ENCODE measurements at regions of chr1 and their contacts with region 1.

Region 1: GRCh38 chr1:1399187-1399871 is at the start of gene CCNL2:
- DNase-seq: peak; percentile 93
- ATAC-seq: peak; percentile 88
- H3K4me3 ChIP-seq: peak within 1 kb of the TSS; percentile 75 to 95 (median 93)
- H3K27ac ChIP-seq: peak within 1 kb of the TSS; percentile 85
- H3K4me1 ChIP-seq: peaks cover 53% of the 10 kb centered on the region
- H3K27me3 ChIP-seq: no peaks in the 10 kb centered on the region
- CTCF ChIP-seq: peak; percentile 63
- EP300 ChIP-seq: no peak
- POLR2A ChIP-seq: peak in 1 of 2 experiments; percentile 62; a peak in 2 of 4 replicates
- RAD21 ChIP-seq: 0 out of 2 replicates have a peak, but pooled peaks have one; percentile 6
- total RNA-seq, gene CCNL2: 19.6 and 105 TPM in 2 replicates

Region 2: DNA sequence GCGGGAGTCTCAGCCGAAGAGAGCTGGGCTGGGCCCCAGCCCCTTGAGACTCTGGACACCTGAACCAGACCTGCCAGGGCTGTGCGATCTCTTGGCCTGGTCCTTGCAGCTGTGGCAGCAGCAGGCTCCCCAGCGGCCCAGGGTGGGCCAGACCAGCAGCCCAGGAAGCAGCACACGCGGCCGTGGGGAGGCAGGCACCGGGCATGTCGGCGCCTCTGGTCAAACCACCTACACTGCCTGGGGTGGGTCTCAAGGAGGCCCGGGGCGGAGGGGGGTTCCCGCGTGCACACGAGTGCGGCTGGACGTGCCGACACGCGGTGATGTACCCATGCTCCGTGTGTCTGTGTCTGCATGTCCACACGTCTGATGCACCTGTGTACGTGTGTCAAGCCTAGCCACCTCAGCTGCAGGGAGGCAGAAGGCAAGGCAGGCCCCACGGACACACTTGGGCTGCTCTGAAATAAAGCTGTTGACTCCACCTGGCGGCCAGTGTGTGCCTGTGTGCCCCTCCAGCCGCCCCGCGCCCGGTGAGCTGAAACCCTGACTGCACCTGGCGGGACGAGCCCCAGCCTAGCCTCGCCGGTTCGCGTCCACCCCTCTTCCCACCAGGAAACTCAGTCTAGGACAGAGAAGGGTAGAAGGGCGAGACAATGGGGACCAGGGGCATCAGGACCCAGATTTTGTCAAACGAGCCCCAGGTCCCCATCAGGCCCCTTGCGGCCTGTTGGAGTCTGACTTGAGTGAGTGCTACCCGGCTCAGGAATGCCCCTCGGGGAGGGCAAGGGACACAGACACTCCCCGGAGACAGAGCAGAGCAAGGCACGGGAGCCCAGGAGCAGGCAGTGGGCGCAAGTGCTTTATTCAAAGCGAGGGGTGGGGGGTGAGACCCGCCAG is 107.5 kb before region 1 on chr1:
- CTCF ChIA-PET with region 1: no interaction called
- POLR2A ChIA-PET with region 1: no interaction called
- in situ Hi-C with region 1: no loop called
- intact Hi-C with region 1: no loop called
- DNase-seq: peak; percentile 64
- ATAC-seq: peak; percentile 71
- H3K4me3 ChIP-seq: no peak overlapping the region
- H3K27ac ChIP-seq: no peak overlapping the region
- H3K4me1 ChIP-seq: peaks cover 11% of the 10 kb centered on the region
- H3K27me3 ChIP-seq: no peaks in the 10 kb centered on the region
- CTCF ChIP-seq: peak; percentile 96
- EP300 ChIP-seq: no peak
- POLR2A ChIP-seq: no peak
- RAD21 ChIP-seq: peak; percentile 79; the same call in 1 of the 2 replicates

Region 3: GRCh38 chr1:1358433-1359261 is 40.7 kb before region 1 on chr1 and contains the start of gene MXRA8:
- CTCF ChIA-PET with region 1: no interaction called
- POLR2A ChIA-PET with region 1: interaction called, 21 read pairs
- in situ Hi-C with region 1: no loop called
- intact Hi-C with region 1: no loop called
- DNase-seq: peak; percentile 79
- ATAC-seq: peak; percentile 28
- H3K4me3 ChIP-seq: peak within 1 kb of the TSS; percentile 69 to 74 (median 71)
- H3K27ac ChIP-seq: peak within 1 kb of the TSS; percentile 88
- H3K4me1 ChIP-seq: peaks cover 57% of the 10 kb centered on the region
- H3K27me3 ChIP-seq: no peaks in the 10 kb centered on the region
- CTCF ChIP-seq: 0 out of 2 replicates have a peak, but pooled peaks have one; percentile 4
- EP300 ChIP-seq: no peak
- POLR2A ChIP-seq: no peak
- RAD21 ChIP-seq: no peak
- total RNA-seq, gene MXRA8: 5.4 and 19.8 TPM in 2 replicates

Region 4: DNA sequence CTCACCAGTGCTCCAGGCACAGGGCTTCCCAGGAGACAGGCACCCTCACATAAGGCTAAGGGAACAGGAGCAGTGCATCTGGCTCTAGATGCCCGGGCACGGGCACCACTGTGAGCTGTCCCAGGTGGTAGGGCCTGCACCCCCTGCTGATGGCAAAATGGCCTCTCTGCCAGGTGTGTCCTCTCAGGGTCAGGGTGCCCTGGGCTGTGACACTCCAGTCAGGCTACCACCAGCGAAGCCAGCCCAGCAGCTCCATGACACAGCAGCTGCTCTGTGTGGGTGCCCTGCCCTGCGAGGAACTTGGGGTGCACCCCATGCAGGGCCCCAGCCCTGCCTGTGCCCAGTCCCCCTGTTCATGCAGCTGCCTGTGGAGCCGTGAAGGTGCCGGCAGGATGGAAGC is 18.9 kb before region 1 on chr1:
- CTCF ChIA-PET with region 1: no interaction called
- POLR2A ChIA-PET with region 1: interaction called, 43 read pairs
- in situ Hi-C with region 1: no loop called
- intact Hi-C with region 1: loop called (anchors 2 kb)
- DNase-seq: no peak
- ATAC-seq: no peak
- H3K4me3 ChIP-seq: no peak overlapping the region
- H3K27ac ChIP-seq: no peak overlapping the region
- H3K4me1 ChIP-seq: peaks cover 37% of the 10 kb centered on the region
- H3K27me3 ChIP-seq: no peaks in the 10 kb centered on the region
- CTCF ChIP-seq: no peak
- EP300 ChIP-seq: no peak
- POLR2A ChIP-seq: no peak
- RAD21 ChIP-seq: no peak

Region 5: DNA sequence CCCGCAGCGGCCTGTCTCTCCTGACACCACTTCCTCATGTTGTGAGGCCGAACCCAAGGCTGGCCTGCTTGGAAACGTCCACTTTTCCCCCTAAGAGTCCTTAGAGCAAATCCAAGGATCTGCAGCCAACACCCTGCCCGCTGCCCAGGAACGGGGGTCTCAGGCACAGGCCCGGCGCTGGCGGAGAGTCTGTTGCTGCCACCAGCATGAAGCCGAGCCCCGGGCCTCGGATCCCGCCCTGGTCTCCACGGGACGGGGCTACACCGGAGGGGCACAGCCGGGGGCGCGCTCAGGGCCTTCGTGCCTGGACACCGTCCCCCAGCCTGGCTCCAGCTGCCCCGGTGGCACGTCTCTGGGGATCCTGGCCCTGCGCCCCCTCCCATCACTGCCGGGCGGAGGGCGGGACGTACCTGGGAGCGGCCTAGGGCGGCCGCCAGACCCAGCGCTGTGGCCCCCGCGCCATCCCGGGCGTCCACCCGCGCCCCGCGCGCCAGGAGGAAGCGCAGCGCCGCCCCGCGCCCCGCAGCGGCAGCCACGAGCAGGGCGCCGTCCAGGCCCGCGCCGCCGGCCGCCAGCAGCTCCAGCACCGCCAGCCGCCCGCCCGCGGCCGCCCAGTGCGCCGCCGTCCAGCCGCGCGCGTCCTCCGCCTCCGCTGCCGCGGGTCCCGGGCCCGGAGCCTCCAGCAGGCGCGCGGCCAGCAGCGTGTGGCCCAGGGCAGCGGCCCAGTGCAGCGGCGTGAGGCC is 20.5 kb after region 1 on chr1:
- CTCF ChIA-PET with region 1: no interaction called
- POLR2A ChIA-PET with region 1: interaction called, 25 read pairs
- in situ Hi-C with region 1: no loop called
- intact Hi-C with region 1: no loop called
- DNase-seq: no peak
- ATAC-seq: peak; percentile 12; the same call in 1 of the 3 replicates
- H3K4me3 ChIP-seq: peak overlapping the region; percentile 37 to 74 (median 70); a peak in 5 of 6 replicates
- H3K27ac ChIP-seq: peak overlapping the region; percentile 44
- H3K4me1 ChIP-seq: peaks cover 67% of the 10 kb centered on the region
- H3K27me3 ChIP-seq: no peaks in the 10 kb centered on the region; a peak in 1 of 5 replicates
- CTCF ChIP-seq: no peak
- EP300 ChIP-seq: no peak
- POLR2A ChIP-seq: no peak
- RAD21 ChIP-seq: no peak

Region 6: GRCh38 chr1:1435106-1435903 is 36.0 kb after region 1 on chr1 and contains the start of gene VWA1:
- CTCF ChIA-PET with region 1: no interaction called
- POLR2A ChIA-PET with region 1: interaction called, 355 read pairs
- in situ Hi-C with region 1: loop called (anchors 5 kb)
- intact Hi-C with region 1: no loop called
- DNase-seq: no peak
- ATAC-seq: no peak
- H3K4me3 ChIP-seq: peak within 1 kb of the TSS; percentile 72 to 88 (median 84)
- H3K27ac ChIP-seq: peak within 1 kb of the TSS; percentile 94
- H3K4me1 ChIP-seq: peaks cover 53% of the 10 kb centered on the region
- H3K27me3 ChIP-seq: no peaks in the 10 kb centered on the region
- CTCF ChIP-seq: peak; percentile 14; the same call in 1 of the 2 replicates
- EP300 ChIP-seq: no peak
- POLR2A ChIP-seq: no peak; a peak in 1 of 4 replicates
- RAD21 ChIP-seq: no peak
- total RNA-seq, gene VWA1: 25.1 and 57.5 TPM in 2 replicates